Right ventricle myocardium inferior (tissue), 1 donor: ENCODE measurements at regions of chr1 and their contacts with region 1.

Region 1: GRCh38 chr1:196660852-196661251 is 9.0 kb downstream of the CFH start:
- DNase-seq: no peak
- ATAC-seq: peak; percentile 46

Region 2: DNA sequence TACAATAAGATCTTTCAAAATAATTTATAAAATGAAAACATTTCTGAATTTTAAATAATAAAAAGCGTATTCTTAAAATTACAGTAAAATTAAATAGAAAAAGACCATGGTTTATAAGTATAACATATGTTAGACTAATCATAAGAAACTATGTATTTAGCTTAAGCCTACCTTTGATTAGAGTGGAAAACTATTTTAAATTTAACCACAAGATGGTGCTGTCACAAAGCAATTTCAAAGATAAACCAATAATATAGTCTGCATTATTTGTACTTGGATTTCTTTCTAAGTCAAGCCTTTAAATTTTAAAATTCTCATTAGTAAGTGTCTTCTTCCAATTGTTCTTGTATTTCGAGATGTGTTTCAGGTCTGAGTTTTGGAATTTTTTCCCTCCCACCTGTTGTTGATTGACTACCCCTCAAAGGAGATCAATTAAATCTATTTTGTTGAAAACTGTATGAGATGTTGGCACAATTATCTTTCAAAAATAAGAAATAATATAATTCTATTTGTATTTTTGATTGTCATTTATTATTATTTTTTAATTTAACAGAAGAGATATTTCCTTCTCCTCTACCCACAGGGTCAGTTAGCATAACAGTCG is 512.4 kb before region 1 on chr1:
- intact Hi-C with region 1: loop called (anchors 5 kb)
- DNase-seq: no peak
- ATAC-seq: no peak

Region 3: GRCh38 chr1:196317535-196318522 is 343.0 kb before region 1 on chr1:
- intact Hi-C with region 1: loop called (anchors 5 kb)
- DNase-seq: no peak
- ATAC-seq: no peak

Region 4: GRCh38 chr1:196355206-196355786 is 305.6 kb before region 1 on chr1:
- intact Hi-C with region 1: loop called (anchors 5 kb)
- DNase-seq: no peak
- ATAC-seq: no peak

Region 5: DNA sequence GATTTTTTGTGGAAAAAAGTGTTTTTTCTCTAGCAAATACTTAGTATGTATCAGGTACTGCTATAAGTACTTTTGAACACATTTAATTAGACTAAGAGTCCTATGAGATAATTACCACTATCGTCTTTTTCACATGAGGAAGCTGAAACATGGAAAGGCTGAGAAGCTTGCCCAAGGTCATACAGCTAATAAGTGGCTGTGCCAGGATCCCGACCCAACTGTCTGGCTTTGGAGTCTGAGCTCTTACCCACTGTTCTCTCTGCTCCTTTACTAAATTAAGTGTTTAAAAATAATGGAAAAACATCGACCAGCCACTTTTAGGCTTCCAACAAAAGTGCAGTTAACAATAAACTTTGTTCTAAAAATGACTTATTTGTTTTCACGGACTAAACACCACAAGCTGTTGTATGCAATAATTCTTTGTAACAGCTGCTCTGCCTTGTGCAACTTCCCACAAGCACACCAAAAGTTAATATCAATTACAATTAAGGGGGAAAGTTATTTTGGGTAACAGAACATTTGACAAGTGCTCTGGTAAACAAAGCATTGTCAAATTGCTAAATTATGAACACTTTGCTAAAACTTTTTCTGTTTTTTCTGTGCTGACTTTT is 682.9 kb after region 1 on chr1:
- intact Hi-C with region 1: no loop called
- DNase-seq: no peak
- ATAC-seq: no peak